ENCODE measurements at regions of chr9 and their contacts with region 1.

Region 1: DNA sequence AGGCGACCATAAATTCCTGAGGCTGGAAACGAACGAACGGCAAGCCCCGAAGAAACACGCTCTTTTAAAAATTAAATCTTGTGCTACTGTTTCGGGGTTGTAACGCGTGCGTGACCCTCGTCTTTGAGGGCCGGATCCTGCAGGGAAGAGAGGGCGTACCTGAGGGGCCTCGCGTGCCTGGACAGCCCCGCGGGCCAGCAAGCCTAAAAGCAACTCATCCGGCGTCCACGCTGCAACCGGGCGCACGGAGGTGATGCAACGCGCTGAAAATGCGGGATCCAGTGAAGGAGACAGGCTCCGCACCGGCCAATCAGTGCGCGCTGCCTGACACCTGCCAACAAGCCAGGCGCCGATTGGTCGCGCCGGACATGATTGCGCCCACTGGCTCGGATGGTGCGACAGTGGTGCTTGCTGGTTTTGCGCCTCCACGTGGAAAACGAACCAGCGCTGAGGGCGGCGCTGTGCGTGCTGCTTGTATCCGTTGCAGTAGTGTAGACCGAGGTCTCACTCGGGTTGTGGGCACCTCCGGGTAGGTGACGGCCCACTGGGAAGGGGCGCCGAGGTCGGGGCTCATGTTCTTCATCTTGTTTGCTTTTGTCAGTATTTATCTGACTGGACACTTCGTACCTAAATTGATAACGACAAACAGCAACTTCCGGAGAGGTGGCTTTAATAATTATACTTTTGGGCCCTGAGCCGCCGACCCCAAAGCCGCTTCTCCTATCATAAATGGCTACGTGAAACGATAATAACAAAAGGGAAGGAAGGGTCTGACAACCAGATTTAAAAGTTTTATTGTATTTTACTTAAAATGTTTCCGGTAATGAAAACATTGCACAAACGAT is at the start of gene IARS1:
- DNase-seq: peak; percentile 99
- ATAC-seq: peak; percentile 87
- H3K4me3 ChIP-seq: peak within 1 kb of the TSS; percentile 70
- H3K27ac ChIP-seq: peak within 1 kb of the TSS; percentile 97
- H3K4me1 ChIP-seq: peaks cover 7 to 23% of the 10 kb centered on the region in 2 experiments
- H3K27me3 ChIP-seq: no peaks in the 10 kb centered on the region
- CTCF ChIP-seq: peak; percentile 53 to 60 (median 55)
- EP300 ChIP-seq: peak; percentile 72
- POLR2A ChIP-seq: peak; percentile 94
- RAD21 ChIP-seq: peak in 1 of 2 experiments; percentile 25; a peak in 2 of 4 replicates
- polyA plus RNA-seq, gene IARS1: 119 to 224 TPM

Region 2: DNA sequence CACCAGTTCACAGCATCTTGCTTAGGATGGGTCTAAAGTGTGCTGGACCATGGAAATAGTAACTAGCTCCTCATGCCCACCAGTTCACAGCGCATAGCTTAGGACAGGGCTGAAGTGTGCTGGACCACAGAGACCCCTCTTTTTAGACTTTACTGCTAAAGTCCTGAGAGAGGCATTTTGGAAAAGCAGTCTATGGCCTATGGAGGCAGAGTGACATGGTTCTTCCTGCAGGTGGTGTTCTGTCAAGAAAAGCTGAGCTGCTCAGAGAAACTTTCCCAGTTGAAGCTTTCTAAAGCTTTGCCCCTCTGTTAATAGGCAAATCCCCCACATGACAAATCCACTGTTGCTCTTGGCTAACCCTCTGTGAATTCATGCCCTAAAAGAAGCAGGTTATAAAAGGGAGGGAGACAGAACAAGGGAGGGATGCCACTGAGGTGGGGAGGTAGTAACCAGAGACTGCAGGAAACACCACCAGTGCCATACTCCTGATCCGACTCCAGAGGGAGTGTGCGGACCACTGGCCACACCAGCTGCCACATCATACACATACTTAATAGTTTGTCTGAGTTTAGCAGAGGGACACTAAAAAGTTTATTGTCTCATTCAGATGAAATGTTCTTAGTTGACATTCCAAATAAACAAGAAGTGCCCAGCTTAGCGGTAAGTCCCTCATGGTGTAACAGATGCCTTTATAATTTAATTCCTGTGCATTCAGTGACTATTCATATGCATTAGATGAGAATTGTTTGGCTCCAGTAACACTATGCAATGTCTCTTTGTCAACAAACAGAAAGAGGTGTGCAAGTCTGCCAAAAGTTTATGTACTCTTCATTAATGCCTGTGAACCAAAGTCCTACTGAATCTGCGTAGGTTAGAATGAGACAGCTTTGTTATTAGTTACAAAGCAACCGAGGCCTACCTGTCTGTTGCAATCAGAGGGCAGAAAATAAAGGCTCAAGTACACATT is 633.9 kb before region 1 on chr9:
- CTCF ChIA-PET with region 1: no interaction called
- POLR2A ChIA-PET with region 1: no interaction called
- in situ Hi-C with region 1: no loop called
- intact Hi-C with region 1: no loop called
- DNase-seq: peak; percentile 42 to 62 (median 54)
- ATAC-seq: peak; percentile 98
- H3K4me3 ChIP-seq: no peak overlapping the region
- H3K27ac ChIP-seq: no peak overlapping the region
- H3K4me1 ChIP-seq: no peaks in the 10 kb centered on the region
- H3K27me3 ChIP-seq: peaks cover 18 to 45% of the 10 kb centered on the region in 2 experiments
- CTCF ChIP-seq: peak; percentile 69 to 71 (median 70)
- EP300 ChIP-seq: no peak
- POLR2A ChIP-seq: no peak
- RAD21 ChIP-seq: peak; percentile 44 to 80; a peak in 3 of 4 replicates

Region 3: GRCh38 chr9:92308893-92309292 is 15.2 kb after region 1 on chr9:
- CTCF ChIA-PET with region 1: no interaction called
- POLR2A ChIA-PET with region 1: interaction called, 38 read pairs
- in situ Hi-C with region 1: no loop called
- intact Hi-C with region 1: no loop called
- DNase-seq: no peak
- ATAC-seq: no peak
- H3K4me3 ChIP-seq: no peak overlapping the region
- H3K27ac ChIP-seq: no peak overlapping the region
- H3K4me1 ChIP-seq: peaks cover 0 to 10% of the 10 kb centered on the region in 2 experiments; a peak in 3 of 5 replicates
- H3K27me3 ChIP-seq: no peaks in the 10 kb centered on the region
- CTCF ChIP-seq: no peak
- EP300 ChIP-seq: no peak
- POLR2A ChIP-seq: no peak
- RAD21 ChIP-seq: no peak

Measured in K562 (cell line).